ENCODE measurements at regions of chr3 and their contacts with region 1.

Region 1: GRCh38 chr3:69791919-69792399 is 52.7 kb downstream of the MITF start:
- DNase-seq: no peak

Region 2: GRCh38 chr3:68802111-68802870 is 989.7 kb before region 1 on chr3:
- intact Hi-C with region 1: no loop called
- DNase-seq: no peak

Region 3: GRCh38 chr3:69161587-69162307 is 630.2 kb before region 1 on chr3:
- intact Hi-C with region 1: loop called (anchors 10 kb)
- DNase-seq: no peak

Region 4: GRCh38 chr3:69691860-69692259 is 100.1 kb before region 1 on chr3:
- intact Hi-C with region 1: loop called (anchors 2 kb)
- DNase-seq: no peak

Region 5: DNA sequence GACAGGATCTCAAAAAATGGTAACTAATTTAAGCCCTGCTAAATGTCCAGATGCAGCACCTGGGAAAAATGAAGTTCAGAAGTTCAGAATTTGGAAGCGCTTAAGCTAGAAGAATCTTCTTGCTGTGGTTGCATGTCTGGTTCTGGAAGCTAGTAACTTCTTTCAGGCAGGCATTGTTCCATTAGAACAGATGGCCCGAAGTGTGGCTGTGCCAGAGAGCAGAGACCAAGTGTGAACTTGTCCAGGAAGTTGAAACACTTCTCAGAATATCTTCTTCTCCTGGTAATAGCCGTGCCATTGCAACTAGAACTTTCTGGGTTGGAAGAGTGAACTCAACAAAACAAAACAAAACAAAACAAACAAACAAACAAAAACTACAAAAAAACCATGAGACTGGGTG is 27.3 kb after region 1 on chr3:
- intact Hi-C with region 1: loop called (anchors 1 kb)
- DNase-seq: no peak

Region 6: DNA sequence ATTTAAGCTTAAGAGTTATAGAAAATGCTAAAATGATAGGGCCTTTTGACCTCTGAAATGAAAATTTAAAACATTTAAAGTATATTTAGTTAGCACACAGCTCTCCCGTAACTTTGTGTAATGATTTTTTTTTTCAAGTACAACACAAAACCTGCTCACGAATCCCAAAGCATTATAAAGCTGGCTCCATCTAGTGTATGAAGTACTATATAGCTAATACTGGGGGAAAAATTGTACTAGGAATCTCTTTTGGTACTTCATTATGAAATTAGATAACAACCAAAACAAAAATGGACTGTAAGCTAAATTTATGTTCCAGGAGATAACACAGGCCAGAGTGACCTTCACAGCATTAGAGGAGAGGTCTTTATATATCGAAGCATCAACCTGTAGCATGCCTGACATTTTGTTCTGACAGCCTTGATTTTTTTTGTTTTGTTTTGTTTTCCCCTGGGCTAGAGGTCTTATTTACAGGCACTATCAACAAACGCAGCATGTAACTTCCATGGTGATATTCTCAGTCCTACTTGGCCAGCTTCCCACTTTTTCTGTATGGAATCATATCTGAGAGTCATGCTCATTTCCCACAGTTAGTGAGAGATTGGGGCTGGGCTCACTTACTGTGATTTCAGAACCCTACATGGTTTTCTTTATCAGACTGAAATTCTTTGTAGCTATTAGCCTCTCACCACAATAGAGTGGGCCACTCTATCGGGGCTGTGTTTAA is 63.6 kb after region 1 on chr3:
- intact Hi-C with region 1: loop called (anchors 5 kb)
- DNase-seq: no peak